B cell (primary cell): ENCODE measurements at regions of chr4 and their contacts with region 1.

Region 1: GRCh38 chr4:140691357-140691756 is 64.8 kb downstream of the TBC1D9 start:
- DNase-seq: no peak
- ATAC-seq: no peak
- H3K4me3 ChIP-seq: no peak overlapping the region
- H3K4me3 Mint-ChIP-seq: no peak overlapping the region
- H3K27ac ChIP-seq: peak overlapping the region in 1 of 2 donors; percentile 6
- H3K27ac Mint-ChIP-seq: peak overlapping the region; percentile 3
- H3K4me1 ChIP-seq: peaks cover 11 to 18% of the 10 kb centered on the region in 2 donors
- H3K4me1 Mint-ChIP-seq: peaks cover 55% of the 10 kb centered on the region
- H3K27me3 ChIP-seq: no peaks in the 10 kb centered on the region
- H3K27me3 Mint-ChIP-seq: no peaks in the 10 kb centered on the region
- CTCF ChIP-seq: no peak

Region 2: DNA sequence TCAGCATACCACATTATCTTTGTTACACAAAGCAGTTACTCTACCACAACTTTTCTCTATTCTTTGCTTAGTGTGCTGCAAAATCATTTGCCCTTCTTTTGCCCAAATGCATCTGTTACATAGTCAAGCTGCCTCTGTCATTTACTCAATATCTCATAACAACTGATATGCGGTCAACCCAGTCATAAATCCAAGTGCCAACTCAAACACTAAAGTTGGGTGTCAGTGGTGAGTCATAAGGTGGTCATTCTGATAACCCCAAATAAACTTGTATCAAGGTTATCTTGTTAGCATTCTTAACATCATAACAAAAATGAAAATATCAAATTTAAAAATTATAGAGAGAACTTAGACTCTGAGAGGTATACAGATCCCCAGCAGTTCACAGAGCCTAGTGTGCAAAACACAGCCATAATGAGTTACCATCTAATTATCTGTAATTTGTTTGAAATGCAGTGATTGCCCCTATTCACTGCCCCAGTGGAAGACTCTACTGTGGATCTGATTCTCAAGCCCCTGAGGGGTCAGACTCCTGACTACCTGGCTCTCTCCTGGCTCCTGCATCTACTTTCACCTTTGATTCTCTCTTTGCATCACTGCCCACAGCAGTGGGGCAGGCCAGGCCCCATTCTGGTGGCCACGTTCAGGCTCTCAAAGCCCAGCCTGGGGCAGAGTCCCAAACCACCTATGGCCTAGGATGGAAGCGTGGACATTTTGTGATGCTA is 35.6 kb after region 1 on chr4:
- CTCF ChIA-PET with region 1: interaction called, 3 read pairs
- POLR2A ChIA-PET with region 1: no interaction called
- intact Hi-C with region 1: loop called (anchors 5 kb)
- DNase-seq: no peak
- ATAC-seq: peak; percentile 29
- H3K4me3 ChIP-seq: no peak overlapping the region
- H3K4me3 Mint-ChIP-seq: peak overlapping the region; percentile 26
- H3K27ac ChIP-seq: peak overlapping the region; percentile 48 to 65
- H3K27ac Mint-ChIP-seq: peak overlapping the region; percentile 83
- H3K4me1 ChIP-seq: peaks cover 52 to 60% of the 10 kb centered on the region in 2 donors
- H3K4me1 Mint-ChIP-seq: peaks cover 72% of the 10 kb centered on the region
- H3K27me3 ChIP-seq: no peaks in the 10 kb centered on the region
- H3K27me3 Mint-ChIP-seq: no peaks in the 10 kb centered on the region
- CTCF ChIP-seq: no peak

Region 3: DNA sequence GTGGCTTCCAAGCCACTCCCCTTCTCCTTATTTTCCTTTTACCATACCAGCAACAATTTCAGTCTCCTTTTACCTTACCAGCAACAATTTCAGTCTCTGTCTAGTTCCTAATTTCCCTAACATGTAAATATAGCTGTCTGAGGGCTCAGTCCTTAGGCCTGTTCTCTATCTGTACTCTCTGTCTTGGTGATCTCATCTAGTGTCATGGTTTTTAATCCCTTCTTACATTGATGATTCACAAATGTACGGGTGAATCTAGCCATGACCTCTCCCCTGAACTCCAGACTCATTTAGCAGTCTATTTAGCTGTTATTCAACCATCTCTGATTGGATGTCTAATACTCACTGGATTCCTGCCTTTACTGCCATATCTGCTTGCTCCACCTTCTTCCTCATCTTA is 952.2 kb after region 1 on chr4:
- CTCF ChIA-PET with region 1: no interaction called
- POLR2A ChIA-PET with region 1: no interaction called
- intact Hi-C with region 1: no loop called
- DNase-seq: no peak
- ATAC-seq: no peak
- H3K4me3 ChIP-seq: no peak overlapping the region
- H3K4me3 Mint-ChIP-seq: no peak overlapping the region
- H3K27ac ChIP-seq: no peak overlapping the region
- H3K27ac Mint-ChIP-seq: no peak overlapping the region
- H3K4me1 ChIP-seq: peaks cover 12 to 35% of the 10 kb centered on the region in 2 donors
- H3K4me1 Mint-ChIP-seq: peaks cover 48% of the 10 kb centered on the region
- H3K27me3 ChIP-seq: no peaks in the 10 kb centered on the region
- H3K27me3 Mint-ChIP-seq: peaks cover 3% of the 10 kb centered on the region
- CTCF ChIP-seq: no peak